ENCODE measurements at regions of chr17 and their contacts with region 1.

Region 1: DNA sequence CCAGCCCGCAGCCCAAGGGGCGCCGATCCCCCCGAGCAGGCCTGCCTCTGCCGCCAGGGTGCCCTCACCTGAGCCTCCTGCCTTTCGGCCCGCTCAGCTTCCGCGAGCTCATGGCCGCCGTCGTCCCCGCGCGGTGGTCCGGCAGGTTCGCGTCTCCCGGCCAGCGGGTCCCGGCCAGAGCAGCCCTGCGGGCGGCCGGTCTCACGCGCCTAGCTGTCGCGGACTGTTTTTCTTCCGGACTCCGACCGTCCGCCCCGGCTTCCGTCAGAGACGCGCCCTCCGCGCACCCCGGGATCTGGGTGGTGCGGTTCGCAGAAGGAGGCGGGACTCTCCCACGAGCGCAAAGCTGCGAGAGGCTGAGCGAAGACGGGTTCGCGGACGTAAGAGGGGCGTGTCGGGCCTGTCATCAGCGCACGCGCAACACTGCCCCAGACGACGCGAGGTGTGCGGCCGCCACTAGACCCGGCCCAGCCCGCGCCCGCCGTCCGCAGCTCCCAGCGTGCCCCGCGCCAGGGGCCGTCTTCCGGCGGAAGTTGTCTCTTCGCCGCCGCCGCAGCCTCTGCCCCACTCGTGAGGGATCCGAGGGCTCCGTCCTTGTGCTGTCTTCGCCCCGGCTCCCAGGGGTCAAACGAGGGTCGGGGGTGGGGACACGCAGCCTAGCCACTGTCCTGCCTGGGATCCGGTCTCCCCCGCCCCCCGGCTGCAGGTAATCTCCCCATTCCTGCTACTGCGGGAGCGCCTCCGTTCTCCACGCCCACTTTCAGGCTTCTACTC is at the start of gene INPP5K:
- DNase-seq: peak; percentile 98
- H3K4me3 ChIP-seq: peak within 1 kb of the TSS; percentile 77 to 98 (median 89)
- H3K27ac ChIP-seq: peak within 1 kb of the TSS; percentile 75
- H3K4me1 ChIP-seq: peaks cover 23% of the 10 kb centered on the region
- H3K27me3 ChIP-seq: no peaks in the 10 kb centered on the region
- CTCF ChIP-seq: no peak
- POLR2A ChIP-seq: peak; percentile 86
- total RNA-seq, gene INPP5K: 41.3 and 44.2 TPM in 2 replicates

Region 2: DNA sequence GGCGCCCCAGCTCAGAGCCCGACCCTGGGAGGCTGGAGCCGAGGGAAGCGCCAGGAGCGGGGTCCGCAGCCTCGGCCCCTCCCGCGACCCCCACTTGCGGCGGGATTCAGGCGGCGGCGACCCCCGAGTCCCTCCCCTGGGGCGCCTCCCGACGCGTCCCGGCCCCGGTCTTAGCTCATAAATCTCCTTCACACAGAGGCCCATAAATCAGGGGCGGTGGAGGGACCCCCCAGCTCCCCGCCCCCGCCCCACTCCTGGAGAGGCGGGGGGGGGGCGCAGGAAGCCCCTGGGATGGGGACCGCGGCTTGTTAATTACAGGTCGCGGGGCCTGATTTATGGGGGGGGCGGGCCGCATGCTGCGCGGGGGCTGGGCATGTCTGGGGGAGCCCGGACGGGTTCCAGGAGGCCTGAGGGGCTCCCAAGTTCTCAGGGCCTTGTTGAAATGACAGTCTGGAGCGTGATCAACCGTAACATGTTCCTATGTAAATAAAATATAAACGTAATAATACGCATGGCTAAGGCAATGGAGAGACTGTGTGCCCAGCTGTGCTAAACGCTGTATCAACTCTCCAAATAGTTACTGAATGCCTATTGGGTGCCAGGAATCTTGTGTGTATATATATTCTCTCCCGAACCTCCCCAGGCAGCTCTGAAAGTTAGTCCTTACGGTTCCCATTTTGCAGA is 256.3 kb before region 1 on chr17:
- CTCF ChIA-PET with region 1: interaction called, 28 read pairs
- POLR2A ChIA-PET with region 1: no interaction called
- dilution Hi-C with region 1: no loop called
- intact Hi-C with region 1: loop called (anchors 1 kb)
- DNase-seq: no peak
- H3K4me3 ChIP-seq: peak overlapping the region in 2 of 3 experiments; percentile 31 to 32
- H3K27ac ChIP-seq: no peak overlapping the region
- H3K4me1 ChIP-seq: no peaks in the 10 kb centered on the region
- H3K27me3 ChIP-seq: peaks cover 2 to 3% of the 10 kb centered on the region in 2 experiments
- CTCF ChIP-seq: no peak
- POLR2A ChIP-seq: no peak

Region 3: GRCh38 chr17:1331708-1332107 is 184.9 kb before region 1 on chr17:
- CTCF ChIA-PET with region 1: interaction called, 19 read pairs
- POLR2A ChIA-PET with region 1: no interaction called
- dilution Hi-C with region 1: no loop called
- intact Hi-C with region 1: no loop called
- DNase-seq: no peak
- H3K4me3 ChIP-seq: no peak overlapping the region
- H3K27ac ChIP-seq: no peak overlapping the region
- H3K4me1 ChIP-seq: no peaks in the 10 kb centered on the region
- H3K27me3 ChIP-seq: no peaks in the 10 kb centered on the region
- CTCF ChIP-seq: no peak
- POLR2A ChIP-seq: no peak

Region 4: DNA sequence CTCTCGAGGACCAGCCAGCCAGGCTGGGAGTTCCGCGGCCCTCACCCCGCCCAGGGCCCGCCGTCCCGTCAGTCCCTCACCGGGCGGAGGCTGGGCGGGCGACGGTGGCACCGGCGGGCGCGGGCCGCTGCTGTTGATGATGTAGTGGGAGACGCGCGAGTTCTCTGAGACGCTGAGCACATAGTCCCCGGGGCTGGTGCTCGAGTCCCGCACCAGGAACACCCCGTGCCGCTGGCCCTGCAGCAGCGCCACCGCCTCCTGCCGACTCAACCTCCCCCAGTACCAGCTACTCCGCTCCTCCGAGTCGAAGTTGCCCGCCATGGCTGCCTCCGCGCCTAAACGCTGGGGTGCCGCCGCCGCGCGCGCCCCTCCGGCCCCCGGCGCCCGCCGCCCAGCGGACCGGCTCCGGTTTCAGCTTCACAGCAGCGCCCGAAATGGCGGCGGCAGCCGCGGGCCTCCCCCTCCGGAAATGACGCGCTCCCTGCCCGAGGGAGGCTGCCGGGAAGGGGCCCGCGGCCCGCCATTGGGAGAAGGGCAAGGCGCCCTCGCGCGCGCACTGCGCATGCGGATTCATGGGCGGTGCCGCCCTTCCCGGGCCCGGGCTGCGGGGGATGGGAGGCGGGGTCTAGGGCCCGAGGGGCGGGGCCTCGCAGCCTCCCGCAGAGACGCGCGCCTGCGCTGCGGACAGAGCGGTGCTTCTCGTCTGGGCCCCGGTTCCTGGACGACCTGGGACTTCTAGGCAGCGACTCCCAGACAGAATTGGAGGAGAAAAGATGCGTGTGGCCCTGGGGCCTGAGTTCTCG is 60.6 kb before region 1 on chr17 and contains the start of gene CRK:
- CTCF ChIA-PET with region 1: interaction called, 30 read pairs
- POLR2A ChIA-PET with region 1: no interaction called
- dilution Hi-C with region 1: no loop called
- intact Hi-C with region 1: loop called (anchors 1 kb)
- DNase-seq: peak; percentile 97
- H3K4me3 ChIP-seq: peak within 1 kb of the TSS; percentile 83 to 95 (median 89)
- H3K27ac ChIP-seq: peak within 1 kb of the TSS; percentile 91
- H3K4me1 ChIP-seq: peaks cover 18% of the 10 kb centered on the region
- H3K27me3 ChIP-seq: no peaks in the 10 kb centered on the region
- CTCF ChIP-seq: no peak
- POLR2A ChIP-seq: peak; percentile 98
- total RNA-seq, gene CRK: 67.2 and 71.3 TPM in 2 replicates

Region 5: GRCh38 chr17:1495265-1495989 is 21.1 kb before region 1 on chr17:
- CTCF ChIA-PET with region 1: interaction called, 36 read pairs
- POLR2A ChIA-PET with region 1: interaction called, 4 read pairs
- dilution Hi-C with region 1: no loop called
- intact Hi-C with region 1: loop called (anchors 1 kb)
- DNase-seq: no peak
- H3K4me3 ChIP-seq: no peak overlapping the region
- H3K27ac ChIP-seq: no peak overlapping the region
- H3K4me1 ChIP-seq: peaks cover 24% of the 10 kb centered on the region
- H3K27me3 ChIP-seq: no peaks in the 10 kb centered on the region
- CTCF ChIP-seq: no peak
- POLR2A ChIP-seq: no peak

Region 6: GRCh38 chr17:1648963-1649843 is 132.6 kb after region 1 on chr17:
- CTCF ChIA-PET with region 1: interaction called, 9 read pairs
- POLR2A ChIA-PET with region 1: no interaction called
- dilution Hi-C with region 1: no loop called
- intact Hi-C with region 1: loop called (anchors 2 kb)
- DNase-seq: peak; percentile 94
- H3K4me3 ChIP-seq: peak overlapping the region; percentile 10 to 52 (median 39)
- H3K27ac ChIP-seq: peak overlapping the region; percentile 54
- H3K4me1 ChIP-seq: peaks cover 40% of the 10 kb centered on the region
- H3K27me3 ChIP-seq: no peaks in the 10 kb centered on the region
- CTCF ChIP-seq: peak; percentile 63 to 94
- POLR2A ChIP-seq: peak; percentile 46